Left colon (tissue), 2 donors: ENCODE measurements at regions of chr2 and their contacts with region 1.

Region 1: GRCh38 chr2:69798909-69799526 is 30.4 kb upstream of the GMCL1 start:
- DNase-seq: no peak
- ATAC-seq: peak; percentile 51

Region 2: GRCh38 chr2:69741619-69742466 is 57.2 kb before region 1 on chr2 and contains the start of gene ANXA4:
- intact Hi-C with region 1: loop called in 1 of 2 experiments (anchors 5 kb)
- DNase-seq: peak; percentile 90 to 94
- ATAC-seq: peak; percentile 90
- total RNA-seq, gene ANXA4: 271 to 289 TPM